ENCODE measurements at regions of chr19 and their contacts with region 1.

Region 1: DNA sequence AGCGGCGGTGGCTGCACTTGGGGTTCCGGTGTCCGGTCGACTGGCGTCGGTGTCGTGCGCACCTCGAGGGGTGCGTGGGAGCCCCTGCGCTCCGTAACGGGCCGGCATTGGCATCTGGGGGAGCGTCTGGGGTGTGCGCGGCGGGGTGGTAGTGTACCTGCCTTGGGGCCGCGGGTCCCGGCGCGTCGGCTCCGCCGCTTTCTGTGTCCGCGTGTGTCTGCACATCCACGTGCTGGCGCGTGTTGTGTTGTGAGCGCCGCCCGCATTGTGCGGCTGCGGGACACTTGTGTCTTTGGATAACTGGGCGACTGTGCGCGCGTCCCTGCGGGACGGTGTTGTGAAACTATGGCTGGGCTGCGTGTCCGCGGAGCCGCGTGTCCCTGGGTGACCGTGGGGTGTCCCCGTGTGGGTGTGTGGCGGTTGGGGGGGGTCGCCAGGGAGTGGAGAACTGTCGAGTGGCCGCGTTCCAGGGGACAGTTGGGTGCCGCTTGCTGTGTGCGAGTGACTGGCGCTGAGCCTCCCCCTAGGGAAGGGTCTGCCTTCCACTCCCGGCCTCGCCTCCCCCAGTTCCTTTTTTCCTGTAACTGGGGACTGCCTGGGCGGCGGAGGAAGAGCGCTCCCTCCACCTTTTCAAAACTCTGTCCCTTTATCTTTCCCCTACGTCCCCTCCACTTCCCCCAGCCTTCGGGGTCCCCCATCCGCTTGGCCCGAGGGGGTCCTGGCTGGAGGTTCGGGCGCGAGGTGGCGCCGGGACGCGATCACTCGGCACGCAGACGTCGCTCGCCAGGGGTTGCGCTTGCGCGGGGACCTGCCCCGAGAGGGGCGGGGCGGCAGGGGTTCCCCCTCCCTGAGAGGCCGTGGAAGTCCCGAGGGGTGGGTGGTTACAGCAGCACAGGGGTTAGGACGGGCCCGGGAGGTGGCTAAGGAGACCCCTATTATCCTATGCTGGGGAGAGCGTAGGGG is 5.7 kb upstream of the NFIC start:
- DNase-seq: peak; percentile 72 to 92
- ATAC-seq: peak; percentile 52 to 79 (median 74)
- H3K4me3 ChIP-seq: peak overlapping the region; percentile 87
- H3K27ac ChIP-seq: peak overlapping the region; percentile 100
- H3K4me1 ChIP-seq: peaks cover 40% of the 10 kb centered on the region
- H3K27me3 ChIP-seq: no peaks in the 10 kb centered on the region
- CTCF ChIP-seq: peak; percentile 7

Region 2: GRCh38 chr19:3429581-3430080 is 68.9 kb after region 1 on chr19:
- intact Hi-C with region 1: loop called in 1 of 2 experiments (anchors 5 kb)
- DNase-seq: peak; percentile 96 to 98
- ATAC-seq: peak; percentile 81 to 92 (median 89)
- H3K4me3 ChIP-seq: peak overlapping the region; percentile 2
- H3K27ac ChIP-seq: peak overlapping the region; percentile 90
- H3K4me1 ChIP-seq: peaks cover 47% of the 10 kb centered on the region
- H3K27me3 ChIP-seq: no peaks in the 10 kb centered on the region
- CTCF ChIP-seq: peak; percentile 100